Activated CD8-positive, alpha-beta memory T cell treated with anti-CD3 and anti-CD28 coated beads, Interleukin-2, amount 10 ng/mL, durations not matched to agents 7 days and 5 days (primary cell): ENCODE measurements at regions of chr5 and their contacts with region 1.

Region 1: DNA sequence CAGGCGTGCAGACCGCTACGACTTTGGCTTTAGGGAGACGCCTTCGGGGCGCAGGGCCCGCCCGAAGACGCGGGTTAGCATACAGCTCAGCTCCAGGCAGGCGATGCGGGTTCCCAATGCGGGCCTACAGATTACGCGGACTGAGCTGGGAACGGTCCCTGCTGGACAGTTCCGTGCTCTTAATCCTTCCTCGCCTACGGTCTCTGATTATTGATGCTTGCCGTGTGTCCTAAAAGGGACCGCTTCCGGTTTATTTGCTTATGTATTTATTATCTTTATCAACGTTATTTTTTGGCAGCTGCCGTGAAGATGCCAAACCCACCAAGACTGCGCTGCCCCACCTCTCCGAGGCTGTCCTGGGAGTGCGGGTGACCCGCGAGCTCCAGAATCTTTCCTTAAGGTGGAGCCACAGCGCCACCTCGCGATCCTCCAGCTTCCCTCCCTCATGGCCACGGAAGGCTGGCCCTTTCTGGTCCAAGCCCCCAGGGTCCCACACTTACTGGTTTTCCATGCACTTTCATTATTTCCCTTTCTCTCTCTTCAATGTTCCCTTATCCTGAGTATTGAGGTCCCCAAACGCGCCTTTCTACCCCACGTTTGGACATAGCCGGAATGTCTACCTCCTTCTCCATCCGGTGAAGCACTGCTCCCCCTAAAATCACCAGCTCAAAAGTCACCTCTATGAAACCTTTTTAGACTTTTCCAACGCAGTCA is 7.0 kb upstream of the EBF1 start:
- DNase-seq: peak; percentile 74
- ATAC-seq: peak; percentile 86
- H3K4me3 Mint-ChIP-seq: peak overlapping the region; percentile 47
- H3K27ac Mint-ChIP-seq: peak overlapping the region; percentile 53
- H3K4me1 Mint-ChIP-seq: peaks cover 14% of the 10 kb centered on the region
- H3K27me3 Mint-ChIP-seq: peaks cover 79% of the 10 kb centered on the region

Region 2: DNA sequence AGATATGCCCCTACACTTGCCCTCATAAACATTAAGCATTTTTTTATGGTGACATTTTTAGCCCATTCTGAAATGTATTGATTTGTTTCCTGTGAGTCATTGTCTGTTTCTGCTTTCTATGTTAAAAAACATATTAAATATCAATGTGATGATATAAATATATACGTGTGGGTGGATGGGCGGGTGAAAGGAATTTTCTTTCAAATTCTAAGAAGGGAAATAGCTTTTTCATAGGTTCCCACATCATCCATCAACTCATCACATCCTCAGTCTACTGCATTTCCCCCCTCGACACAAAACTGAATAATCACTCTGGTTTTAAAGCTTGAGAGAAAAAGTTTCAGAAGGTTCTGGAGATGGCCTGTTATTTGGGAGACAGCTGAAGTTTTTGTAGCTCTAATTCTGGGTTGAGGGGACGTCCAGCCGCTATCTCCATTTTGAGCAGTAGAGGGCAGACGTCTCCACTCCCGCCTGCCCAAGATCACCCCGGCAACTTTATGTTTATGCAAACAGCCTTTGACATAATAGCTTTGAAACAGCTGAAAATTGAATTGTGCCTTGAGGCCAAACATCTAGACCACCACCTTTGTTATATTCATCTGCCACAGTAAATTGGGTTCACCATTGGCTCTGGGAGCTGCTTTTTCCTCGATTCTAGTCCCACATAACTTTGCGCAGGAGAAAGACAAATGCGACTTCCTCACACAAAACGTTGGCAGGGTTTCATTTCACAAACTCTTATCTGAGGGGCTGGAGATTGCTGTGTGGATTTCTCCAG is 1031.5 kb before region 1 on chr5:
- CTCF ChIA-PET with region 1: interaction called, 10 read pairs
- DNase-seq: peak; percentile 54
- ATAC-seq: peak; percentile 66
- H3K4me3 Mint-ChIP-seq: no peak overlapping the region
- H3K27ac Mint-ChIP-seq: no peak overlapping the region
- H3K4me1 Mint-ChIP-seq: no peaks in the 10 kb centered on the region
- H3K27me3 Mint-ChIP-seq: peaks cover 19% of the 10 kb centered on the region

Region 3: GRCh38 chr5:158780656-158781237 is 326.0 kb before region 1 on chr5:
- CTCF ChIA-PET with region 1: no interaction called
- DNase-seq: no peak
- ATAC-seq: no peak
- H3K4me3 Mint-ChIP-seq: no peak overlapping the region
- H3K27ac Mint-ChIP-seq: no peak overlapping the region
- H3K4me1 Mint-ChIP-seq: peaks cover 3% of the 10 kb centered on the region
- H3K27me3 Mint-ChIP-seq: peaks cover 8% of the 10 kb centered on the region

Region 4: DNA sequence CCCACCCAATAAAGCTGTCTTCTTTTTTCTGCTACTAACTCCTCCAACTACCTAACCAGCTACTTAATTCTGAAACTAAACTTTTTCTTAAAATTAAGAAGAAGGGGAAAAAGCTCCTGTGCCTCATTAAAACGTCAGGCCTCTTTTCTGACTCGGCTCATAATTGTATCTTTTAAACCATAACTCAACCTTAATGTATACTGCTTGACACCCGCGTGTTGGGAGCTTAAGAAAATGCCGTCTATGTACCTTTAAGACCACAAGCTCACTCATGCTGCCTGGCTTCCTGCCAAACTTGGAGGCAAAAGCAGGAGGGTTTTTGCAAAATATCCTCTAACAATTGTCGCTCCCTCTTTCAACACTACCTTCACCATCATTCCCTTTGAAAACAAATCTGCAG is 12.0 kb before region 1 on chr5:
- CTCF ChIA-PET with region 1: interaction called, 24 read pairs
- DNase-seq: peak; percentile 59
- ATAC-seq: no peak
- H3K4me3 Mint-ChIP-seq: no peak overlapping the region
- H3K27ac Mint-ChIP-seq: no peak overlapping the region
- H3K4me1 Mint-ChIP-seq: peaks cover 20% of the 10 kb centered on the region
- H3K27me3 Mint-ChIP-seq: peaks cover 79% of the 10 kb centered on the region

Region 5: DNA sequence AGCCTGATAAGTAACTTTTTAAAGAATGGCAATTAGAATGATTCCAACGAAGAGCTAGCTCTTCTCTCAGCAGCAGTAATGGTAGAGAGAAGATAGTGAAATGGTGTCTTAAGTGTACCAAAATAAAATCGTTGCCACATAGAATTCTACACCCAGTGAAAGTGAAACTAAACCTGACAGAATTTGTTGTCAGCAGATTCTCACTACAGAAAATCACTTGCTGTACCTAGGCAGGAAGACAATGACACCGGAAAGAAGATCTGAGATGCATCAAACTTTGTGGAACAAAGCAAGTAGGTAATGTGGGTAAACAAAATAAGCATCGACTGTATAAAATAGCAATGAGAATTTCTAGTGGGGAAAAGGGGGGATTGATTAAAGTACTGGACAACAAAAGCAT is 13.7 kb after region 1 on chr5:
- CTCF ChIA-PET with region 1: interaction called, 13 read pairs
- DNase-seq: no peak
- ATAC-seq: peak; percentile 90
- H3K4me3 Mint-ChIP-seq: peak overlapping the region; percentile 47
- H3K27ac Mint-ChIP-seq: peak overlapping the region; percentile 86
- H3K4me1 Mint-ChIP-seq: peaks cover 22% of the 10 kb centered on the region
- H3K27me3 Mint-ChIP-seq: peaks cover 16% of the 10 kb centered on the region

Region 6: GRCh38 chr5:159128070-159128541 is 21.4 kb after region 1 on chr5:
- CTCF ChIA-PET with region 1: interaction called, 16 read pairs
- DNase-seq: no peak
- ATAC-seq: no peak
- H3K4me3 Mint-ChIP-seq: no peak overlapping the region
- H3K27ac Mint-ChIP-seq: no peak overlapping the region
- H3K4me1 Mint-ChIP-seq: peaks cover 5% of the 10 kb centered on the region
- H3K27me3 Mint-ChIP-seq: peaks cover 59% of the 10 kb centered on the region

Region 7: DNA sequence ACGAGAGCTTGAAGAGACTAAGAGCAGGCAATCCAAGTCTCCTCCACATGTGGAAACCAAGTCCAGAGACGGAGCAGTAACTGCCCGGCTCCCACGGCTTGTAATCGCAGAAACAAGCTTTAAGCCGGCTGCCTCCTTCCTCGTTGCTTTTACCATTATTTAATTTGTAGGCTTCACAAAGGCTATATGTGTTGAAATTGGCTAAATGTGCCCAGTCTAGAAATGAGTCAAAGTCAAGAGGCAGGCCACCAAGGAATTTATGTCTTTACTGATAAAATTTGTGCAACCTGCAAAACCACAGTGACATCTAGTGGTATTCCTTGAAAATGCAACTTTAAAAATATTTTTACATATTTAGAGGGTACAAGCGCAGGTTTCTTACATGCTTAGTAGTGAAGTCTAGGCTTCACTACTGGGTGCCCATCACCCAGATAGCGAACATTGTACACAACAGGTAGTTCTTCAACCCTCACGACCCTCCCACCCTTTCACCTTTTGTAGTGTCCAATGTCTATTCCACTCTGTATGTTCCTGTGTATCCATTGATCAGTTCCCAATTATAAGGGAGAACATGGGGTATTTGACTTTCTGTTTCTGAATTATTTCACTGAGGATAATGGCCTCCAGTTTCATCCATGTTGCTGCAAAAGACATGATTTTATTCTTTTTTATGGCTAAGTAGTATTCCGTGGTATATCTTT is 26.5 kb after region 1 on chr5:
- CTCF ChIA-PET with region 1: interaction called, 16 read pairs
- DNase-seq: no peak
- ATAC-seq: peak; percentile 42
- H3K4me3 Mint-ChIP-seq: no peak overlapping the region
- H3K27ac Mint-ChIP-seq: no peak overlapping the region
- H3K4me1 Mint-ChIP-seq: no peaks in the 10 kb centered on the region
- H3K27me3 Mint-ChIP-seq: peaks cover 24% of the 10 kb centered on the region